IMR-90 (cell line): ENCODE measurements at regions of chr18 and their contacts with region 1.

Region 1: DNA sequence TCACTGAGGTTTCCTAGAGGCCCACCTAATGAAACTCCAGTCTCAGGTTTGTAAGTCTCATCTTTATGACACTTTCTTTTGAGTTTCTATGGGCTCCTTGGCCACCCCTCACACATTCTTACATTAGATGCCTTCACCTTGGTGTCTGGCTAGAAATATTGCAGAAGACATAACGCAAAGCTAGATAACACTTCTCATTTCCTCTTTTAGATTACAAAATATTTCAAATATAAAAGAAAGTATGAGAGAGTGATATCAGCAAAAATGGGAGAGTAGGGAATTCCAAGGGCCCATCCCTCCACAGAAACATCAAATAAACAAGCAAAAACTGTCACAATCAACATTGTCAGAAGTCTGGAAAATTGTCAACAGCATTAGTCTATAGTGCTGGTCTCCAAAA is 43.3 kb upstream of the ZCCHC2 start:
- DNase-seq: no peak
- ATAC-seq: no peak
- H3K4me3 ChIP-seq: no peak overlapping the region
- H3K27ac ChIP-seq: no peak overlapping the region
- H3K4me1 ChIP-seq: no peaks in the 10 kb centered on the region
- H3K27me3 ChIP-seq: peaks cover 9% of the 10 kb centered on the region
- CTCF ChIP-seq: no peak
- POLR2A ChIP-seq: no peak
- RAD21 ChIP-seq: no peak

Region 2: DNA sequence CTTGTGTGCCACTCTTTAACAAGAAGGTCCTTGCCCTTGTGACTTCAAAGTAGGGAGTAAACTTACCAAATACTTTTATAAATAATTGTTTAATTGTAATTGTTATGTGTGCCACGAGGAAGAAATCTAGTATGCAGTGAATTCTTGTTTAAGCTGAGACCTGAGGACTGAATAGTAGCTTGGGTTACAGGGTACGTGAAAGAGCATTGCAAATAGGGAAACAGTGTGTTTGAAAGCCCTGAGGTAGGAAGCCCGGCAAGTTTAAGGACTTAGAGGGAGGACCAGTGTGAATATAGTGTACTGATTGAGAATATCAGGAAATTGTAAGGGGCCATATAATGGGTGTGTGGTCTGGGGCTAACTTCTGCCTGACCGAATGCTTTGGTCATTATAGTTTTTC is 262.0 kb after region 1 on chr18:
- CTCF ChIA-PET with region 1: interaction called, 10 read pairs
- POLR2A ChIA-PET with region 1: no interaction called
- dilution Hi-C with region 1: no loop called
- in situ Hi-C with region 1: no loop called
- intact Hi-C with region 1: no loop called
- DNase-seq: no peak
- ATAC-seq: no peak
- H3K4me3 ChIP-seq: no peak overlapping the region
- H3K27ac ChIP-seq: no peak overlapping the region
- H3K4me1 ChIP-seq: peaks cover 8% of the 10 kb centered on the region
- H3K27me3 ChIP-seq: no peaks in the 10 kb centered on the region
- CTCF ChIP-seq: no peak
- POLR2A ChIP-seq: no peak
- RAD21 ChIP-seq: no peak